Pancreas (tissue), 10 donors: ENCODE measurements at regions of chr2 and their contacts with region 1.

Region 1: GRCh38 chr2:161992526-161992925 is 81.5 kb downstream of the DPP4 start:
- DNase-seq: no peak
- ATAC-seq: no peak
- H3K4me3 ChIP-seq: no peak overlapping the region
- H3K27ac ChIP-seq: no peak overlapping the region
- H3K4me1 ChIP-seq: no peaks in the 10 kb centered on the region
- H3K27me3 ChIP-seq: no peaks in the 10 kb centered on the region
- CTCF ChIP-seq: no peak

Region 2: GRCh38 chr2:161915098-161915497 is 77.4 kb before region 1 on chr2:
- intact Hi-C with region 1: loop called in 1 of 3 experiments (anchors 5 kb)
- DNase-seq: no peak
- ATAC-seq: no peak
- H3K4me3 ChIP-seq: no peak overlapping the region
- H3K27ac ChIP-seq: no peak overlapping the region
- H3K4me1 ChIP-seq: no peaks in the 10 kb centered on the region
- H3K27me3 ChIP-seq: no peaks in the 10 kb centered on the region
- CTCF ChIP-seq: no peak

Region 3: DNA sequence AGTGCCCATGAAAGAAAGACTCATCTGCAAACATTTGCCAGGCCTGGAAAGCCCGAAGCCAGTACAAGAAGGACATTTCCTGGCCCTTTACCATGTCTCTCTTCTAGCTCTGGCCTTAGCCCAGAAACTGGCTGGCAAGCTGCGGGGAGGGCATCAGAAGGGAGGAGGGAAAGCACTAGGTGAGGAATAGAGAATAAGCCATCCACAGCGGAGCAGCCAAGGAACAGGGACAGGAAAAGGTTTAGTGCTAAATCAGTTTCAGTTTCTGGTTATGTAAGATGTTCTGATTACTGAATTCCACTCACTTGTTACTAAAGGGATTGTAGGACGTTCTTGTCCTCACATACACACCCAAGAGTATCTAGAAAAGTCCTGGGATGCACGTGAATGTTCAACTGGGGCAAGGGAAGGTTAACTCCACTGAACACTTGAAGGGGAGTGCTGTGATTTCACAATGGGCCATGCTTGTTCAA is 126.1 kb after region 1 on chr2:
- intact Hi-C with region 1: loop called in 1 of 3 experiments (anchors 5 kb)
- DNase-seq: no peak
- ATAC-seq: peak in 3 of 4 donors; percentile 20 to 35 (median 33)
- H3K4me3 ChIP-seq: no peak overlapping the region
- H3K27ac ChIP-seq: no peak overlapping the region
- H3K4me1 ChIP-seq: no peaks in the 10 kb centered on the region
- H3K27me3 ChIP-seq: no peaks in the 10 kb centered on the region
- CTCF ChIP-seq: no peak

Region 4: GRCh38 chr2:162153608-162154224 is 161.2 kb after region 1 on chr2:
- intact Hi-C with region 1: no loop called
- DNase-seq: peak in 4 of 6 donors; percentile 12 to 48 (median 30)
- ATAC-seq: peak; percentile 61 to 89 (median 77)
- H3K4me3 ChIP-seq: no peak overlapping the region
- H3K27ac ChIP-seq: no peak overlapping the region
- H3K4me1 ChIP-seq: no peaks in the 10 kb centered on the region
- H3K27me3 ChIP-seq: no peaks in the 10 kb centered on the region
- CTCF ChIP-seq: peak in 2 of 4 donors; percentile 31 to 33